ENCODE measurements at regions of chrX and their contacts with region 1.

Region 1: GRCh38 chrX:154428176-154429010 is at the start of gene ATP6AP1:
- DNase-seq: peak; percentile 88
- H3K4me3 Mint-ChIP-seq: peak within 1 kb of the TSS; percentile 83
- H3K27ac Mint-ChIP-seq: peak within 1 kb of the TSS; percentile 80
- H3K4me1 Mint-ChIP-seq: peaks cover 22% of the 10 kb centered on the region
- H3K27me3 Mint-ChIP-seq: no peaks in the 10 kb centered on the region
- total RNA-seq, gene ATP6AP1: 49.8 and 54.3 TPM in 2 replicates

Region 2: DNA sequence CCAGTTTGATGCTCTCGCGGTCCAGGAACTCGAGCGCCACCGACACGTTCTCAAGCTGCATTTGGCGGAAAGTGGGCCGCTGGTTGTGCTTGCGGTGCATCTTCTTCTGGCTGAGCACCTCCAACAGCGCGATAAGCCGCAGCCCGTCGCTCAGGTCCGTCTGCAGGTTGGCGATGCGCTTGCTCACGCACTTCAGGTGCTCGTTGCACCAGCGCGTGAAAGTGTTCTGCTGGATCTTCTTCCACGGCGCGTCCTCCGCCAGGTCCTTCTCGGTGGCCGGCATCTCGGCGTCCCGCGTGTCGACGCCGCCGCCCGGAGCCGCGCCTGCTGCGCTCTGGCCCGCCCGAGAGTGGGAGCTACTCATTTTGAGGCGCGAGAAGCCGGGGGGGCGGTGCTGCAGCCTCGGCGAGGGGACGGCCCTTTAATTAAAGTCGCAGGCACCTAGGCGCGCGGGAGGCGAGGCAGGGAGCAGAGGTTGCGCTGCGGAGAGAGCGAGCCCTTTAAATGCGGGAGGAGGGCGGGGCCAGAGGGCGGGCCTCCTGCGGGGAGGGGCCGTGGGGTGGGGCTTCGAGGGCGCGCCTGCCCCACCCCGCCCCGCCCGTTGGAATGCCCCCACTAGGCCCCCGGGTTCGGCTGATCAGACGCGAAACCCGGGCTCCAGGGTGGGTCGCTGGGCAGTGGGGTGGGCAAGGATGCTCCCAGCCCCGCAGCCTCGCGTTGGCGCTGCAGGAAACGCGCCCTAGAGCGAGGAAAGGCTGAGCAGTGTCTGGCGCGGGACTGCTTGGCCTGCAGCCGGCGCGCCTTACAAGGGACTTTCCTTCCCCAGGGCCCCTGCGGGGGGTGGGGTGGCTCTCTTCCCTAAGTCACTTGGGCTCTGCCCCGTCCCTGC is 57.3 kb before region 1 on chrX:
- intact Hi-C with region 1: loop called (anchors 1 kb)
- DNase-seq: peak; percentile 88
- H3K4me3 Mint-ChIP-seq: peak overlapping the region; percentile 84
- H3K27ac Mint-ChIP-seq: peak overlapping the region; percentile 63
- H3K4me1 Mint-ChIP-seq: peaks cover 11% of the 10 kb centered on the region
- H3K27me3 Mint-ChIP-seq: no peaks in the 10 kb centered on the region

Region 3: GRCh38 chrX:154443992-154444754 is 15.8 kb after region 1 on chrX and contains the start of gene FAM50A:
- intact Hi-C with region 1: no loop called
- DNase-seq: peak; percentile 73
- H3K4me3 Mint-ChIP-seq: peak within 1 kb of the TSS; percentile 78
- H3K27ac Mint-ChIP-seq: peak within 1 kb of the TSS; percentile 78
- H3K4me1 Mint-ChIP-seq: no peaks in the 10 kb centered on the region
- H3K27me3 Mint-ChIP-seq: no peaks in the 10 kb centered on the region
- total RNA-seq, gene FAM50A: 84.9 and 95.4 TPM in 2 replicates

Region 4: DNA sequence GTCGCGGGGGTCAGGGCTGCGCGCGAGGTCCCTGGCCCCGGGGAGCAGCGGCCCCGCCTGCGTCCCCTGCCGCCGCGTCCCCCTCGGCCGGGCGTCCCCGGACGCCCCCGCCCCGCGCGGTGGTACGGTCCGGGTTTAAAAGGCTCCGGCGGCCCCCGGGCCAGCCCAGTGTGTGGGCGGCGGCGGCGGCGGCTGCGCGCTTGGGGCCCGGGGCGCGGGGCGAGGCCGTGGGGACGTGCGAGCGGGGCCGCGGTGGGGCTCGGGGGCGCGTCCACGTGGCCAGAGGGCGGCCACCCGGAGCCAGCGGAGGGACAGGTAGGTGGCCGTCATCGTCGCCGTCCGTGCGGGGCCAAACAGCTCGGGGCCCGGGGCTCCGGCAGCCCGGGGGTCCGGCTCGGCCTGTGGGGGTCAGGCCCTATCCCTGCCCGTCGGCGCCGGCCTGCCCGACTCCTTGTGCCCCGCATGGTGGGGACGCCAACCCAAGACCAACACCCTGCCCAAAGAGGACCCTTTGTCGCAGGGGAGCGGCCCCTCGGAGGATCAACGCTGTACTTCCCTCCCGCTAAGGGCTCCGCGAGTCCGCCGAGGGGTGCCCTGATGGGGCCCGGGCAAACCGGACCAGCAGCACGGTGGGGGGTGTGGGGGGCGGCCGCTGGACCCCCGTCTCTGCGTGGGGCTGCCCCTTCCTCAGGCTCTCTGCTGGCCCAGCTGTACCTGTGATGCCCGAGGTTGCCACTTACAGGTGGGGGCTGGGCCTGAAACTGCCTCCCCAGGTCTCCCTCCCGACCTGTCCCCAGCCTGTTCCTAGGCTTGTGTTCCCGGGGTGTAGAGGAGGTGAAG is 29.9 kb after region 1 on chrX and contains the start of gene PLXNA3:
- intact Hi-C with region 1: no loop called
- DNase-seq: peak; percentile 38
- H3K4me3 Mint-ChIP-seq: peak within 1 kb of the TSS; percentile 96
- H3K27ac Mint-ChIP-seq: peak within 1 kb of the TSS; percentile 94
- H3K4me1 Mint-ChIP-seq: peaks cover 5% of the 10 kb centered on the region
- H3K27me3 Mint-ChIP-seq: no peaks in the 10 kb centered on the region
- total RNA-seq, gene PLXNA3: 45.4 and 61.1 TPM in 2 replicates

Measured in activated T-helper 1 cell treated with anti-CD3 and anti-CD28 coated beads, Interleukin-12 subunit alpha, Interleukin-12 subunit beta, Interleukin-2, Interleukin-4 antibody, amounts not matched to agents 30 ng/mL and 10 ng/mL and 1 ng/mL, durations not matched to agents 14 hours and 24 hours and 36 hours (primary cell).